ENCODE measurements at regions of chr16 and their contacts with region 1.

Region 1: GRCh38 chr16:23858542-23858941 is 22.8 kb downstream of the PRKCB start:
- DNase-seq: no peak
- H3K4me3 Mint-ChIP-seq: no peak overlapping the region
- H3K27ac Mint-ChIP-seq: no peak overlapping the region
- H3K4me1 Mint-ChIP-seq: peaks cover 79% of the 10 kb centered on the region
- H3K27me3 Mint-ChIP-seq: no peaks in the 10 kb centered on the region

Region 2: GRCh38 chr16:23869052-23869451 is 10.5 kb after region 1 on chr16:
- CTCF ChIA-PET with region 1: interaction called, 21 read pairs
- intact Hi-C with region 1: no loop called
- DNase-seq: peak; percentile 71
- H3K4me3 Mint-ChIP-seq: no peak overlapping the region
- H3K27ac Mint-ChIP-seq: peak overlapping the region; percentile 59
- H3K4me1 Mint-ChIP-seq: peaks cover 62% of the 10 kb centered on the region
- H3K27me3 Mint-ChIP-seq: no peaks in the 10 kb centered on the region

Region 3: DNA sequence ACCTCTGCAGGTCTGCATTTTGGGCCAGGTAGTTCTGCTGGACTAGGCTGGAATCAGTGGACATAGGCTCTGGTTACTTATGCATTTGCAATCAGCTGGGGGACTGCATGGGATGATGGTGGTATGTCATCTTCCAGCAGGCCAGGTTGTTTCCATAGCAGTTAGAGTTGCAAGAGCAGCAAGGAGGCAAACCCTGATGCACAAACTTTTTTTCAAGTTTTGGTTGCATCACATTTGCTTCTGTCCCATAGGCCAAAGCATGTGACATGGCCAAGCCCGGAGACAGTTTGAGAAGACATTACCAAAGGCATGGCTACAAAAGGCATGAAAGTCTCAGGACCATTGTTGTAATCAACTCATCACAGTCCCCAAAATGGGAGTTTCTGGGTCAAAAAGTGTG is 35.4 kb after region 1 on chr16:
- CTCF ChIA-PET with region 1: no interaction called
- intact Hi-C with region 1: no loop called
- DNase-seq: no peak
- H3K4me3 Mint-ChIP-seq: no peak overlapping the region
- H3K27ac Mint-ChIP-seq: no peak overlapping the region
- H3K4me1 Mint-ChIP-seq: peaks cover 36% of the 10 kb centered on the region
- H3K27me3 Mint-ChIP-seq: no peaks in the 10 kb centered on the region

Measured in activated naive CD4-positive, alpha-beta T cell treated with anti-CD3 and anti-CD28 coated beads for 36 hours (primary cell).